ENCODE measurements at regions of chr6 and their contacts with region 1.

Region 1: GRCh38 chr6:36615018-36615761 is 21.0 kb downstream of the SRSF3 start:
- DNase-seq: peak; percentile 65 to 75 (median 68)
- ATAC-seq: peak; percentile 76
- H3K4me3 ChIP-seq: no peak overlapping the region
- H3K27ac ChIP-seq: no peak overlapping the region
- H3K4me1 ChIP-seq: peaks cover 6 to 9% of the 10 kb centered on the region in 2 experiments; a peak in 3 of 5 replicates
- H3K27me3 ChIP-seq: no peaks in the 10 kb centered on the region; a peak in 1 of 5 replicates
- CTCF ChIP-seq: peak; percentile 81 to 97 (median 92)
- EP300 ChIP-seq: no peak; the same call in 1 of the 2 replicates
- POLR2A ChIP-seq: no peak
- RAD21 ChIP-seq: peak; percentile 82 to 92

Region 2: GRCh38 chr6:36701401-36701991 is 86.3 kb after region 1 on chr6:
- CTCF ChIA-PET with region 1: interaction called, 3 read pairs
- POLR2A ChIA-PET with region 1: interaction called, 9 read pairs
- in situ Hi-C with region 1: no loop called
- intact Hi-C with region 1: loop called (anchors 5 kb)
- DNase-seq: peak in 1 of 4 experiments; percentile 37
- ATAC-seq: peak; percentile 86
- H3K4me3 ChIP-seq: no peak overlapping the region
- H3K27ac ChIP-seq: no peak overlapping the region
- H3K4me1 ChIP-seq: peaks cover 0 to 5% of the 10 kb centered on the region in 2 experiments; a peak in 2 of 5 replicates
- H3K27me3 ChIP-seq: peaks cover 33 to 67% of the 10 kb centered on the region in 2 experiments
- CTCF ChIP-seq: peak; percentile 58 to 70 (median 66)
- EP300 ChIP-seq: no peak
- POLR2A ChIP-seq: no peak
- RAD21 ChIP-seq: peak; percentile 33 to 78

Region 3: GRCh38 chr6:36724514-36725390 is 109.6 kb after region 1 on chr6:
- CTCF ChIA-PET with region 1: interaction called, 20 read pairs
- POLR2A ChIA-PET with region 1: interaction called, 3 read pairs
- in situ Hi-C with region 1: loop called (anchors 10 kb)
- intact Hi-C with region 1: loop called (anchors 2 kb)
- DNase-seq: peak; percentile 80 to 82 (median 80)
- ATAC-seq: peak; percentile 86
- H3K4me3 ChIP-seq: no peak overlapping the region
- H3K27ac ChIP-seq: no peak overlapping the region
- H3K4me1 ChIP-seq: peaks cover 0 to 9% of the 10 kb centered on the region in 2 experiments; a peak in 1 of 5 replicates
- H3K27me3 ChIP-seq: peaks cover 22 to 57% of the 10 kb centered on the region in 2 experiments
- CTCF ChIP-seq: peak; percentile 83 to 90 (median 86)
- EP300 ChIP-seq: no peak
- POLR2A ChIP-seq: no peak
- RAD21 ChIP-seq: peak; percentile 89 to 97

Region 4: GRCh38 chr6:36759148-36759759 is 144.1 kb after region 1 on chr6:
- CTCF ChIA-PET with region 1: interaction called, 21 read pairs
- POLR2A ChIA-PET with region 1: interaction called, 9 read pairs
- in situ Hi-C with region 1: loop called (anchors 10 kb)
- intact Hi-C with region 1: loop called (anchors 2 kb)
- DNase-seq: peak; percentile 88 to 94 (median 94)
- ATAC-seq: peak; percentile 96
- H3K4me3 ChIP-seq: peak overlapping the region; percentile 7; the same call in 1 of the 2 replicates
- H3K27ac ChIP-seq: no peak overlapping the region
- H3K4me1 ChIP-seq: peaks cover 0 to 5% of the 10 kb centered on the region in 2 experiments; a peak in 3 of 5 replicates
- H3K27me3 ChIP-seq: peaks cover 25 to 46% of the 10 kb centered on the region in 2 experiments; a peak in 4 of 5 replicates
- CTCF ChIP-seq: peak; percentile 97 to 99 (median 98)
- EP300 ChIP-seq: no peak; the same call in 1 of the 2 replicates
- POLR2A ChIP-seq: no peak
- RAD21 ChIP-seq: peak; percentile 91 to 96

Region 5: GRCh38 chr6:37005061-37005810 is 390.0 kb after region 1 on chr6 and contains the start of gene FGD2:
- CTCF ChIA-PET with region 1: no interaction called
- POLR2A ChIA-PET with region 1: no interaction called
- in situ Hi-C with region 1: no loop called
- intact Hi-C with region 1: loop called (anchors 10 kb)
- DNase-seq: peak; percentile 54 to 65 (median 62)
- ATAC-seq: peak; percentile 84
- H3K4me3 ChIP-seq: no peak within 1 kb of the TSS
- H3K27ac ChIP-seq: no peak within 1 kb of the TSS
- H3K4me1 ChIP-seq: peaks cover 2 to 12% of the 10 kb centered on the region in 2 experiments; a peak in 3 of 5 replicates
- H3K27me3 ChIP-seq: peaks cover 25 to 62% of the 10 kb centered on the region in 2 experiments
- CTCF ChIP-seq: no peak
- EP300 ChIP-seq: no peak
- POLR2A ChIP-seq: no peak
- RAD21 ChIP-seq: no peak
- polyA plus RNA-seq, gene FGD2: not detected

Region 6: DNA sequence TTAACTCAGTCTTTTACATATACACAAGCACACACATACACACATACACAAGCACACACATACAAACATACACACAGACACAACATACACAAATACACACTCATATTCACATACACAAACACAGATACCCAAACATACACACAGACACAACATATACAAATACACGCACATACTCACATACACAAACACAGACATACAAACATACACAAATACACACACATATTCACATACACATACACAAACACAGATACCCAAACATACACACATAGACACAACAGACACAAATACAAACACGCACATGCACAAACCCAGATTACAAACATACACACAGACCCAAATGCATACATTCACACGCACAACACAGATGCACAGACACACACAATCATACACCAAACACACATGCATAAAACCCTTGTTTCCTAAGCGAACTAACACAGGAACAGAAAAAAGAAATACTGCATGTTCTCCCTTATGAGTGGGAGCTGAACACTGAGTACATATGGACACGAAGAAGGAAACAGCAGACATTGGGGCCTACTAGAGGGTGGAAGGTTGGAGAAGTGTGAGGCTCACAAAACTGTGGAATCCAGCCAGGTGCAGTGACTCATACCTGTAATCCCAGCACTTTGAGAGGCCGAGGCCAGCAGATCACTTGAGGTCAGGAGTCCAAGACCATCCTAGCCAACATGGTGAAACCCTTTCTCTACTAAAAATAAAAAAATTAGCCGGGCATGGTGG is 589.0 kb after region 1 on chr6:
- CTCF ChIA-PET with region 1: no interaction called
- POLR2A ChIA-PET with region 1: no interaction called
- in situ Hi-C with region 1: no loop called
- intact Hi-C with region 1: no loop called
- DNase-seq: peak in 2 of 4 experiments; percentile 34 to 88
- ATAC-seq: peak; percentile 53
- H3K4me3 ChIP-seq: no peak overlapping the region
- H3K27ac ChIP-seq: peak overlapping the region; percentile 83
- H3K4me1 ChIP-seq: peaks cover 60 to 72% of the 10 kb centered on the region in 2 experiments
- H3K27me3 ChIP-seq: no peaks in the 10 kb centered on the region
- CTCF ChIP-seq: peak in 1 of 3 experiments; percentile 3; a peak in 1 of 6 replicates
- EP300 ChIP-seq: peak; percentile 54
- POLR2A ChIP-seq: peak; percentile 41; the same call in 1 of the 2 replicates
- RAD21 ChIP-seq: peak; percentile 13 to 25; a peak in 3 of 4 replicates